ENCODE measurements at regions of chr7 and their contacts with region 1.

Region 1: DNA sequence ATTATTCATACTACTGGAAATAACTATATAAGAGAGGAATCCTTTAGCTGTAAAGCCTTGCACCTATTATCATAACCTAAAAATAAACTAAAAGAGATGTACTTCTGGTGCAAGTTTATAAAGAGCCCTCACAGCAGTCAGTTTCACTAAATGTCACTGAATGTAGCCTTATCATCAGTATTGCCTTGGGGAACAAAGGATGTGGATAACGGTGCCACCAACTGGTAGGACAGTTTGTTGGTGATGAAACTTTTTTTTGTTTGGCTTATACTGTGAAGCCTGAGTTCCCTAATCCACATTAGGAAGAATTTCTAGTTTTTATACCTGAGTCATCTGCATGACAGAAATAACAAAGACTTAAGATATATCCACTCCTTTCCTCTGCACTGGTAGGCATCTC is 117.9 kb upstream of the COL1A2 start:
- DNase-seq: peak; percentile 59
- ATAC-seq: peak; percentile 87
- H3K4me3 ChIP-seq: no peak overlapping the region
- H3K27ac ChIP-seq: no peak overlapping the region
- H3K4me1 ChIP-seq: no peaks in the 10 kb centered on the region; the same call in 1 of the 2 replicates
- H3K27me3 ChIP-seq: 0 out of 2 replicates have a peak, but pooled peaks cover 2% of the 10 kb centered on the region
- CTCF ChIP-seq: peak; percentile 55
- POLR2A ChIP-seq: no peak
- RAD21 ChIP-seq: peak; percentile 63

Region 2: DNA sequence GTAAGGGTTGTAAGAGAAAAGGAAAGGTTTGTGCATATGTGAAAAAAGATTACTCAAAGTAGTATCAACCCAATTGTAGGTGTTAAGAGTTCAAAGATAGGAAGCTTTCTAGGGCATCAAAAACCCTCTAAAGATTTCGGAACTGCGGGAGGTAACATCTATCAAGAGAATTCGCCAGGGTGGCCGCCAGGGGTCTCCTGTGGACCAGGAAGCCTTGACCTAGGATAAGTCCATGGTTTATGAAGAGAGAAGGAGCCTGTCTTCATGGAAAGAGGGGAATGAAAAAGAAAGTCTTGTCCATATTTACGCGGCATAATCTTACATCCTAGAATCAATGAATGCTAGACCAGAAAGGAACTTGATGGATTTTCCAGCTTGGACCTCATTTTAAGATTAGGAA is 561.6 kb before region 1 on chr7:
- CTCF ChIA-PET with region 1: no interaction called
- POLR2A ChIA-PET with region 1: no interaction called
- dilution Hi-C with region 1: no loop called
- in situ Hi-C with region 1: no loop called
- intact Hi-C with region 1: loop called (anchors 1 kb)
- DNase-seq: peak; percentile 39
- ATAC-seq: peak; percentile 82
- H3K4me3 ChIP-seq: no peak overlapping the region
- H3K27ac ChIP-seq: no peak overlapping the region
- H3K4me1 ChIP-seq: no peaks in the 10 kb centered on the region
- H3K27me3 ChIP-seq: no peaks in the 10 kb centered on the region; the same call in 1 of the 2 replicates
- CTCF ChIP-seq: peak; percentile 62
- POLR2A ChIP-seq: no peak
- RAD21 ChIP-seq: peak; percentile 63

Region 3: GRCh38 chr7:93799750-93800357 is 476.9 kb before region 1 on chr7:
- CTCF ChIA-PET with region 1: interaction called, 4 read pairs
- POLR2A ChIA-PET with region 1: no interaction called
- dilution Hi-C with region 1: no loop called
- in situ Hi-C with region 1: no loop called
- intact Hi-C with region 1: loop called (anchors 1 kb)
- DNase-seq: peak; percentile 23
- ATAC-seq: no peak
- H3K4me3 ChIP-seq: no peak overlapping the region
- H3K27ac ChIP-seq: no peak overlapping the region
- H3K4me1 ChIP-seq: no peaks in the 10 kb centered on the region
- H3K27me3 ChIP-seq: no peaks in the 10 kb centered on the region
- CTCF ChIP-seq: peak; percentile 67
- POLR2A ChIP-seq: no peak
- RAD21 ChIP-seq: peak; percentile 63

Region 4: GRCh38 chr7:94004024-94004951 is 272.5 kb before region 1 on chr7 and contains the start of gene BET1:
- CTCF ChIA-PET with region 1: no interaction called
- POLR2A ChIA-PET with region 1: no interaction called
- dilution Hi-C with region 1: no loop called
- in situ Hi-C with region 1: no loop called
- intact Hi-C with region 1: loop called (anchors 2 kb)
- DNase-seq: peak; percentile 97
- ATAC-seq: peak; percentile 98
- H3K4me3 ChIP-seq: peak within 1 kb of the TSS; percentile 73
- H3K27ac ChIP-seq: peak within 1 kb of the TSS; percentile 84
- H3K4me1 ChIP-seq: peaks cover 2% of the 10 kb centered on the region; the same call in 1 of the 2 replicates
- H3K27me3 ChIP-seq: no peaks in the 10 kb centered on the region
- CTCF ChIP-seq: no peak
- POLR2A ChIP-seq: peak; percentile 84
- RAD21 ChIP-seq: no peak
- total RNA-seq, gene BET1: 9.9 and 36.4 TPM in 2 replicates

Region 5: DNA sequence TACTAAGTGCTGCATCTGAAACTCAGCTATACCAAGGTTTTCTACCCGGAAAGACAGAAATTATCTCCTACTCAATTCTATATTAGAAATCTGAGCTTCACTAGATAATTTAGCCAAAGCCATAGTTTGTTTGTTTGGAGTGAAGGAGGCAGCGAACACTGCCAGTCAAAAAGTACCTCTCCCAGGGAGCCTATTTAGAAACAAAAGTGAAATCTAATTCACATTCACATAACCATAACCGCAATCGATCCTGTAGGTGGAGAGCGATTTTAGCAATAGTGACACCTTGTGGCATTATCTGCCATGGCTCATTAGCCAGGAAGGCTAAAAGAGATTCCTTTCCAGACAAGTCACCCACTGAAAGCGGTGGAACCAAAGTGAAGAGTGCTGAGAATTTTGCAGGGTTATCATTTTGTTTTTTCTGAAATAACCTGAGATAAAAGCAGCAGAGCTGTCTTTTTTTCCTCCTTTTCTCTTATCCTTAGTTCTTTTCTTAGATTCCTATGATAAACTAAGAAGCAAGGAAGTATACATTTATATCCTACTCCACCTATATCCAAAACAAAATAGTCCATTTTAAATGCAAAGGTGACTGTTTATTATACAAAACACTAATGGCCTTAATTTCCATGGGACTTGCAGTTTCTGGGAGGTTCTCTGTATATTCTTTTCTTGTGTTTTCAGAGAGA is 189.0 kb before region 1 on chr7:
- CTCF ChIA-PET with region 1: no interaction called
- POLR2A ChIA-PET with region 1: no interaction called
- dilution Hi-C with region 1: no loop called
- in situ Hi-C with region 1: no loop called
- intact Hi-C with region 1: loop called (anchors 5 kb)
- DNase-seq: peak; percentile 85
- ATAC-seq: peak; percentile 87
- H3K4me3 ChIP-seq: peak overlapping the region; percentile 15; the same call in 1 of the 2 replicates
- H3K27ac ChIP-seq: no peak overlapping the region
- H3K4me1 ChIP-seq: peaks cover 9% of the 10 kb centered on the region
- H3K27me3 ChIP-seq: no peaks in the 10 kb centered on the region
- CTCF ChIP-seq: peak; percentile 78
- POLR2A ChIP-seq: no peak
- RAD21 ChIP-seq: peak; percentile 84

Region 6: DNA sequence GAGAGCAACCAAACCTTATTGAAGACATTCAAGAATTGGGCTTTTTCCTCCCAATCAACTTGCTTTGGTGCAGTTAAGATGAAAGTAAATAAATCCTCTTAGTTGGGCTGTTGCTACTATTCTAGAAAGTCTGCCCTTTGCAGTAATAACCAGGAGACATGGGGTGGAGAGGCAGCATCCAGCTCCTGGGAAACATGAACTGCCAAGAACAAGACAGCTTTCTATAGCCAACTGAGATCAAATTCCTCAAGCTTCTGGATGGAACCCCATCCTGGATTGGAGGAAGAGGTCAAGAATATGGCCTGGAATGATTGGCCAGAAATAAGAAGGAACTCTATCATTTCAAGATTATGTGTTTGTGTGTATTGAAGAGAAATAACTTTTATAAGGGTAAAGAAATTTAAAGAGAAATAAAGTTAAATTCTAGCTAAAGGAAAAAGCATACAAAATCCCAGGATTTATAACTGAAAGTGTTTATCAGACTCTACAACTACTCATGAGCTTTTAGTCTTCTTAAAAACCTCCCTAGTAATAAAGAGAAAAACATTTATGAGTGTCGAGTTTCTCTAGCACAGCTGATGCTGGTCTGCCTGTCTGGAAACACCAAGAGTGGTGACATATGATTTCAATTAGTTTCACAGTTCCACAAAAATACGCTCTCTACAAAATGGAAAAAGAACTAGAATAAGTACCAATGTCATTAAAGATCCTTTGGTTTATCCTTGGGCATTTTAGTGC is 47.8 kb after region 1 on chr7:
- CTCF ChIA-PET with region 1: no interaction called
- POLR2A ChIA-PET with region 1: no interaction called
- dilution Hi-C with region 1: no loop called
- in situ Hi-C with region 1: no loop called
- intact Hi-C with region 1: no loop called
- DNase-seq: peak; percentile 53
- ATAC-seq: peak; percentile 72
- H3K4me3 ChIP-seq: no peak overlapping the region
- H3K27ac ChIP-seq: peak overlapping the region; percentile 47; the same call in 1 of the 2 replicates
- H3K4me1 ChIP-seq: no peaks in the 10 kb centered on the region
- H3K27me3 ChIP-seq: no peaks in the 10 kb centered on the region
- CTCF ChIP-seq: no peak
- POLR2A ChIP-seq: no peak
- RAD21 ChIP-seq: no peak

Region 7: GRCh38 chr7:94595717-94596116 is 318.9 kb after region 1 on chr7:
- CTCF ChIA-PET with region 1: no interaction called
- POLR2A ChIA-PET with region 1: no interaction called
- dilution Hi-C with region 1: no loop called
- in situ Hi-C with region 1: no loop called
- intact Hi-C with region 1: no loop called
- DNase-seq: no peak
- ATAC-seq: no peak
- H3K4me3 ChIP-seq: no peak overlapping the region
- H3K27ac ChIP-seq: no peak overlapping the region
- H3K4me1 ChIP-seq: no peaks in the 10 kb centered on the region
- H3K27me3 ChIP-seq: no peaks in the 10 kb centered on the region
- CTCF ChIP-seq: no peak
- POLR2A ChIP-seq: no peak
- RAD21 ChIP-seq: no peak

Measured in IMR-90 (cell line).